Psoas muscle (tissue), 8 donors: ENCODE measurements at regions of chr14 and their contacts with region 1.

Region 1: GRCh38 chr14:104137297-104138097 is 890 bp upstream of the KIF26A start:
- DNase-seq: peak; percentile 69 to 75
- ATAC-seq: peak; percentile 81 to 94 (median 90)
- H3K4me3 ChIP-seq: peak overlapping the region; percentile 68
- H3K27ac ChIP-seq: peak overlapping the region; percentile 36
- H3K4me1 ChIP-seq: peaks cover 9% of the 10 kb centered on the region
- H3K27me3 ChIP-seq: peaks cover 0 to 68% (median 21%) of the 10 kb centered on the region in 3 donors
- CTCF ChIP-seq: peak; percentile 91

Region 2: DNA sequence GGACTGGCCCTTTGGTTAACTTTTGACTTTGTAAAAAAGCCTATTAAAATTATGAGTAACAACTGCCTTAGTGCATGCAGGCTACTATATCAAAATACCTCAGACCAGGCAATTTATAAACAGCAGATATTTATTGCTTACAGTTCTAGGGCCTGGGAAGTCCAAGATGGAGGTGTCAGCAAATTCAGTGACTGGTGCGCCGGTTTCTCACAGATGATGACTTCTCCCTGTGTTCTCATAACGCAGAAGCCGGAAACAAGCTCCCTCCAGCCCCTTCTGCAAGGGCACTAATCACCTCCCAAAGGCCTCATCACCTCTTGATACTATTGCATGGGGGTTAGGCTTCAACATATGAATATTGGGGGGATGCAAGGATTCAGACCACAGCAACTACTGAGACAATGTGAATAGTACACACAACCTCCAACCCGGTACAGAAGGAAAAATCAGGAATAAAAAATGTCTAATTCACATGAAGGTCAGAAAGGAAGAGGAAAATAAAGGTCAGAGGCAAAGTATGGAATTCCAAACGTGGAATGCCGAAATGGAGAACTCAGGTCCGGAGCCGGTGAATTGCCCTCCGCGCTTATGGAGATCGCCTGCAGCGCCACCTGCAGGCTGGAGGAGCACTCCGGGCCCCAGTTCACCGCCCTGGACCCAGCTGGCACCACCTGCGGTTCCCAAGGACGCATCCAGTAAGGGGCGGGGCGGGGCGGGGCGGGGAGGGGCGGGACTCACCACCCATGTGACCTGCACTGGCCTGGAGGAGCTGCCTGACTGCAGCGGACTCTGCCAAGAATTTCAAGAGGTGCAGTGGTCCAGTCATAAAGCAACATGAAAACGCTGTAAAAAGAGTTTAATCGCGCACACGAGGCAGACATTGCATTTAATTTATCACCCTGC is 204.3 kb after region 1 on chr14:
- intact Hi-C with region 1: loop called in 1 of 2 experiments (anchors 10 kb)
- DNase-seq: no peak
- ATAC-seq: peak in 1 of 4 donors; percentile 26
- H3K4me3 ChIP-seq: no peak overlapping the region
- H3K27ac ChIP-seq: no peak overlapping the region
- H3K4me1 ChIP-seq: no peaks in the 10 kb centered on the region
- H3K27me3 ChIP-seq: peaks cover 0 to 35% (median 3%) of the 10 kb centered on the region in 3 donors
- CTCF ChIP-seq: peak; percentile 34

Region 3: DNA sequence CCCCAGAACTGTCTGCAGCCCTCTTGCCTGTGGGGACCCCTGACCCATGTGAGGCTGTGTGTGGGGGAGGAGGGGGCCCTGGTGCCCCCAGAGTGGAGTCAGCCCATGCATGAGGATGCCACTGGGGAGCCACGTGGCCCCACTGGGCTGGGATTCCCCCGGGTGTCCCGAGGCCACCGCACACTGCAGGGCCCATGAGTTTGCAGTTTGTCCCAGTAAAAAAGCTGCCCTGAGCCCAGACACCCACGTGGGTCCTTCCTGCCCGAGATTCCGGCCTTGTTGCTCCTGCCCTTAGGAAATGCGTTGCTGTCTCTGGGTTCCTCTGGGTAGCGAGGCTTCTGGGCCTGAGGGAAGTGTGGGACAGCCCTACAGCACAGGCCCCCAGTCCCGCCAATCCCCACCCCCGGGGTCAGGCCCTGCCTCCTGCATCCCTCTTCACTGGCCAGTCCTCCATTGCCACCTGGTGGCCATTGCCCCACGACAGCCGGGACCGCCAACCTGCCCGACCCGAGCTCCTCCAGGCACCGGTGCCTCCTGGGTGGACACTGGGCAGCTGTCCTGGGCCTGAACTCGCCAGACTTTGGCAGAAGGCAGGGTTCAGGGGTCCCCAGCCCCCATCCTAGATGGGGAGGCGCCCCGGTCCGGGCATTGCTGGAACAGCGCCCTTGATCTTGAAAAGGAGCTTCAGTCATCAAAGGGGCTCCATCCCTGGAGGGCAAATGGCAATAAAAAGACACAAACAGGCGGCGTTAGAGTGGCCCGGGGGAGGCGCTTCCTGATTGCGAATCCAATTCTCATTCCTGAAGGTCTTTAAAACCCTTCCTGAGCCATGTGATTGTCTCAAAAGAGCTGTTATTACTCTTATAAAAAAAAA is 426.5 kb after region 1 on chr14:
- intact Hi-C with region 1: loop called (anchors 1 to 5 kb)
- DNase-seq: peak; percentile 67 to 84
- ATAC-seq: peak; percentile 84 to 92 (median 85)
- H3K4me3 ChIP-seq: no peak overlapping the region
- H3K27ac ChIP-seq: no peak overlapping the region
- H3K4me1 ChIP-seq: no peaks in the 10 kb centered on the region
- H3K27me3 ChIP-seq: peaks cover 0 to 42% (median 3%) of the 10 kb centered on the region in 3 donors
- CTCF ChIP-seq: peak; percentile 81

Region 4: DNA sequence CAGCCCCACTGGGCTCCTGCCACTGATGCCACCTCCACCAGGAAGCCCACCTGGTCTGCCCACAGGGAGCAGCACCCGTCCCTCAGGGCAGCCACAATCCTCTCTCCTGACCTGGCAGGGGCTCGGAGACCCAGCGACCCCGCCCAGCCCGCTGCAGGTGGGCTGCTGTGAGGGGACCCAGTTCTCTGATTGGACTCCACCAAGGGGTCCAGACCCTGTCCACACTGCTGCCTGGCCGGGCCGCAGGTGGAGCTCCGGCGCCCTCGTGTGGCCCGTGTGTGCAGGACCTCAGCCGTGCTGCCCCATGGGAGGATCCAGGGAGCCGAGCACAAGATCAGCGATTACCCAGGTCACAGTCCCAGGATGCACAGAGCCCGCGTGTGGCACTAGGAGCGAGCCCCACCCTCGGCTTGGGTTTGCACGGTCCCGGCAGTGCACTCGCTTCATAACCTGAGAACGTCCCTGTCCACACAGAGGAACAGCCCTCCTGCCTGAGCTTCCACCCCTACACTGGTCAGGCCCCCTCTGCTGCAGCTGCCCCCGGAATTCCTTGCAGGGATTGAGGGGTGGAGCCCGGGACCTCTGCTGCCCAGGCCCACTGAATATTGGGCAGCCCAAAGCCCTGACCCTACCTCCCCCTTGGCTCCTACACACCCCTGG is 502.5 kb after region 1 on chr14:
- intact Hi-C with region 1: loop called (anchors 1 to 5 kb)
- DNase-seq: peak; percentile 47 to 69
- ATAC-seq: peak; percentile 84 to 95 (median 87)
- H3K4me3 ChIP-seq: no peak overlapping the region
- H3K27ac ChIP-seq: no peak overlapping the region
- H3K4me1 ChIP-seq: no peaks in the 10 kb centered on the region
- H3K27me3 ChIP-seq: peaks cover 0 to 34% (median 7%) of the 10 kb centered on the region in 3 donors
- CTCF ChIP-seq: peak; percentile 94

Region 5: DNA sequence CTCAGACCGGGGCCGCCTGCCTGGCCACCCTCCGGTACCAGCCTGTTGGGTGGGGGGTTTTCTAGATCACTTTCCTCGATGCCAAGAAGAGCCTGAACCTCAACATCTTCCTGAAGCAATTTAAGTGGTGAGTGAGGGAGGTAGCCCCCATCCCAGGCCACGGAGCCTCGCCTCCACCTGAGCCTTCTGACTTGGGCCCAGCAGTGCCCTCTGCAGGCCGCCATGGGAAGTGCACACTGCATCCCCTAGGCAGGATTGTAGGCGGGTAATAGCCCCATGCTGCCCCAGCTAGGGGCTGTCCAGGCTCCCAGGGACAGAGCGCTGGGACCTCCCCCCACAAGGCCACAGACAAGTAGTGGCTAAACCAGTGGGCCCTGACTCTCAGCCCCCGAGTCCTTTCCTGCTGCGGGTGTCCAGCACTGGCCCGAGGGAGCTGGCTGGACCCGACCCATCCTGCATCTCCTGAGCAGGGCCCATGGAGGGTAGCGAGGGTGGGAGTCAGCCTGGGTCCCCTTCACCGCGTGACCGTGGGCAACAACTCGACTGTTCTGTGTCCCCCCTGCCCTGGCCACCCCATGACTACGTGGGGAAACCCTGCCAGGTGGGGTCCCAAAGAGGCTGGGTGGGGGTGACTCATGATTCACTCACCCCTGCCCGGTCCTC is 571.2 kb after region 1 on chr14:
- intact Hi-C with region 1: loop called in 1 of 2 experiments (anchors 5 kb)
- DNase-seq: peak; percentile 72 to 85
- ATAC-seq: peak; percentile 80 to 88 (median 84)
- H3K4me3 ChIP-seq: no peak overlapping the region
- H3K27ac ChIP-seq: no peak overlapping the region
- H3K4me1 ChIP-seq: no peaks in the 10 kb centered on the region
- H3K27me3 ChIP-seq: no peaks in the 10 kb centered on the region
- CTCF ChIP-seq: peak; percentile 99

Region 6: DNA sequence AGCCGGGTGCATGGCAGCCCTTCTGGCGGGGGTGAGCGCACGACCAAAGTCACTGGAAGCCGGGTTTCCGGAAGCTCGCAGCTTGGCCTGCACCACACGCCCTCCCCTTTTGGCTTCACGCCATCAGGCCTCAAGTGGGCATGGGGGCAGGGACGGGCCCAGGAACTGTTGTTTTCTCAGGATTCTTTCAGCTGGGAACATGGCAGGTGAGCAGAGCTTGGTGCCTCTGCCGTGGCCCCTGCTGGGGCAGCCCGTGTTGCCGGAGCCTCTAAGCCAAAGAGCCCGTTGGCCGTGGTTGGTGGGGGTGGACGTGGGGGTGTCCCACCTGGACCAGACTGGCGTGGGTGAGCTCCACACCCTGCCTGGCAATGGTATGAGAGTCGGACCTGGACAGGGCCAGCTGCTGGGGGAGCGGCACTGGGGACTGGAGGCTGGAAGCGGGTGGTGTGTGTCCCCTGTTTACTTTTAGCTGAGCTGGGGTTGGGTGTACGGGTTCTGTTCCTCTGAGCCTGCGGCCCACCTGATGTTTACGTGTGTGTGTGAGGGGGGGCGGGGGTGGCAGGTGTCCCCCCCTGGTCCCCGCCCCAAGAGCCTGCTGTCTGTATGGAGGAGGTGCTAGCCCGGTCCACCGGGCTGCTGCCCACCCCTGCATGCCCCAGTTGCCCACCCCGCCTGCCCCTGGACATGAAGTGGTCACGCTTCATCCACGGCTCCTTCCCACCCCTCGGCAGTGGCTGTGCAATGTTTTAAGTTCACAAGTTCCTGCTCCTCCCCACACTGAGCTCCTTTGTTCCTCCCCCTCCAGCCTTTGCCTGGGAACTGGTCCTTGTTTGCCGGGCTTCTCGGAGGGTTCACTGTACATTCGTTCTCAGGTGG is 758.5 kb after region 1 on chr14:
- intact Hi-C with region 1: no loop called
- DNase-seq: peak; percentile 23 to 48
- ATAC-seq: peak in 1 of 4 donors; percentile 15
- H3K4me3 ChIP-seq: no peak overlapping the region
- H3K27ac ChIP-seq: no peak overlapping the region
- H3K4me1 ChIP-seq: no peaks in the 10 kb centered on the region
- H3K27me3 ChIP-seq: no peaks in the 10 kb centered on the region
- CTCF ChIP-seq: no peak